Activated B cell treated with CpG ODN at 0.5 μM for 24 hours (primary cell): ENCODE measurements at regions of chr4 and their contacts with region 1.

Region 1: GRCh38 chr4:143184217-143185116 is at the start of gene USP38:
- DNase-seq: peak; percentile 73
- ATAC-seq: peak; percentile 87
- H3K4me3 Mint-ChIP-seq: peak within 1 kb of the TSS; percentile 93
- H3K27ac Mint-ChIP-seq: peak within 1 kb of the TSS; percentile 94
- H3K4me1 Mint-ChIP-seq: peaks cover 56% of the 10 kb centered on the region
- H3K27me3 Mint-ChIP-seq: no peaks in the 10 kb centered on the region
- CTCF ChIP-seq: no peak
- total RNA-seq, gene USP38: 20.9 and 24.9 TPM in 2 replicates

Region 2: DNA sequence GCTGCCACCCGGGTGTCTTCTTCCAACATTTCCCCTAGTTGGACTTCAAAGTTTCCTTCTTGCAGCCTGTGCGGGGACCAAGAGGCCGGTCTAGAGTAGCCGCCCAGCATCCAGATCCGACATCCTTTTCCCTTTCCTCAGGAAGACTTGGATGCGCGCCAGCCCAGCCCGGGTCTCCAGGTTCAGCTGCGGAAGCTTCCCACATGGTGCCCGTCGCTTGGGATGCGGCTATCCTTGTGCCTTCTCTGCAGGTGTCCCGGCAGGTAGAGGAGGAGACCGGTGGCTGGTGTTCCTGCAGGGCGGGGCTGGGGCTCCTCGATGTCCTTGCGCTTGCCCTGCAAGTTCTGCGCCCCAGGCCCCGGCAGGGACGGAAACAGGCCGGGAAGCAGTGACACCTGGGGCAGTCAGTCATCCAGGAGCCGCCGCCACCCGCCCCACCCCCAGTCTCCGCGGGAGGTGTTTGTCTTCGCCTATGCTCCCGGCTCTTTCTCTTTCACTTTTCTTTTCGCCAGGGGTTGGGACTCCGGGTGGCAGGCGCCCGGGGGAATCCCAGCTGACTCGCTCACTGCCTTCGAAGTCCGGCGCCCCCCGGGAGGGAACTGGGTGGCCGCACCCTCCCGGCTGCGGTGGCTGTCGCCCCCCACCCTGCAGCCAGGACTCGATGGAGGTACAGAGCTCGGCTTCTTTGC is 1548.2 kb before region 1 on chr4 and contains the start of gene IL15:
- CTCF ChIA-PET with region 1: no interaction called
- POLR2A ChIA-PET with region 1: no interaction called
- intact Hi-C with region 1: loop called (anchors 5 kb)
- DNase-seq: peak; percentile 35
- ATAC-seq: peak; percentile 73
- H3K4me3 Mint-ChIP-seq: peak within 1 kb of the TSS; percentile 94
- H3K27ac Mint-ChIP-seq: peak within 1 kb of the TSS; percentile 84
- H3K4me1 Mint-ChIP-seq: peaks cover 39% of the 10 kb centered on the region
- H3K27me3 Mint-ChIP-seq: no peaks in the 10 kb centered on the region
- CTCF ChIP-seq: no peak
- total RNA-seq, gene IL15: 3.4 and 3.5 TPM in 2 replicates

Region 3: DNA sequence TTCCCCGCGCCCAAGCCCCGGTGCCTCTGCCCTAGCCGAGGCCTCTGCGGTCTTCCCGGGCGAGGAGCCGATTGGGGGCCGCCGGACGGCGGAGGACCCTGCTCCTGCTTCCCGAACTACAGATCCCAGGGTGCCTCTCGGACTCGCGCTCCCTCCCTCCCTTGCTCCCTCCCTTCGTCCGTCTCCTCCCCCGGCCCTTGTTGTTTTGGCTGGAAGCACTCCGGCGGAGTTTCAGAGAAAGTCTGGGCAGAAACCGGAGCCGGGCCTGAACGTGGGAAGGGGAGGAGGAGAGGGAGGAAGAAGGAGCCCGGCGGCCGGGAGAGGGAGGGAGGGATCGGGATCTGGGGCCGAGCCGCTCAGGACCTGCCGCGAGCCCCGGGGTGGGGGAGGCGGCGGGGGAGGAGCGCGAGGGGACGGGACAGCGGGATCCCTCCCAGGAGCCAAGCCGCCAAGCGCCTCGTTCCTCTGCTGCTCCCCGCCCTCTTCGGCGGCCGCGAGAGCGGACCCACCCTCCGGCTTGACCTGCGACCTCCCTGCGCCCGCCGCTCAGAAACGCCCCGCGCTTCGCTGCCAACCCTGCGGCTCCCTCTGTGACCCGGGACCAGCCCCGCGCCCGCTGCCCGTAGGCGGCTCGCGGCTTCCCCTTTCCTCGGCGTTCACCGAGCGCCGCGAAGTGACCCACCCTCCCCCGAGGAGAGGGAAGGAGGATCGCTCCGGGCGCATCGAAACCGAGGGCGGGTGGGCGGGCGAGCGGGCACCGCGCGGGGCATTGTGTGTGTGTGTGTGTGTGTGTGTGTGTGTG is 151.7 kb after region 1 on chr4:
- CTCF ChIA-PET with region 1: no interaction called
- POLR2A ChIA-PET with region 1: interaction called, 3 read pairs
- intact Hi-C with region 1: loop called (anchors 1 kb)
- DNase-seq: peak; percentile 67
- ATAC-seq: peak; percentile 57
- H3K4me3 Mint-ChIP-seq: peak overlapping the region; percentile 95
- H3K27ac Mint-ChIP-seq: peak overlapping the region; percentile 56
- H3K4me1 Mint-ChIP-seq: peaks cover 14% of the 10 kb centered on the region
- H3K27me3 Mint-ChIP-seq: peaks cover 15% of the 10 kb centered on the region
- CTCF ChIP-seq: no peak

Region 4: GRCh38 chr4:143558823-143559756 is 374.6 kb after region 1 on chr4:
- CTCF ChIA-PET with region 1: no interaction called
- POLR2A ChIA-PET with region 1: no interaction called
- intact Hi-C with region 1: loop called (anchors 2 kb)
- DNase-seq: peak; percentile 52
- ATAC-seq: peak; percentile 88
- H3K4me3 Mint-ChIP-seq: peak overlapping the region; percentile 94
- H3K27ac Mint-ChIP-seq: peak overlapping the region; percentile 92
- H3K4me1 Mint-ChIP-seq: peaks cover 28% of the 10 kb centered on the region
- H3K27me3 Mint-ChIP-seq: no peaks in the 10 kb centered on the region
- CTCF ChIP-seq: no peak

Region 5: GRCh38 chr4:145097821-145098674 is 1913.6 kb after region 1 on chr4 and contains the starts of genes ABCE1 and ANAPC10:
- CTCF ChIA-PET with region 1: no interaction called
- POLR2A ChIA-PET with region 1: no interaction called
- intact Hi-C with region 1: loop called (anchors 1 kb)
- DNase-seq: peak; percentile 87
- ATAC-seq: peak; percentile 89
- H3K4me3 Mint-ChIP-seq: peak within 1 kb of the TSS; percentile 94
- H3K27ac Mint-ChIP-seq: peak within 1 kb of the TSS; percentile 96
- H3K4me1 Mint-ChIP-seq: peaks cover 51% of the 10 kb centered on the region
- H3K27me3 Mint-ChIP-seq: no peaks in the 10 kb centered on the region
- CTCF ChIP-seq: no peak
- total RNA-seq, gene ABCE1: 75.5 and 81.6 TPM in 2 replicates
- total RNA-seq, gene ANAPC10: 18.2 and 21.8 TPM in 2 replicates